PC-9 (cell line): ENCODE measurements at regions of chr2 and their contacts with region 1.

Region 1: GRCh38 chr2:168118733-168119514 is 128.5 kb downstream of the STK39 start:
- DNase-seq: peak in 1 of 2 experiments; percentile 35
- H3K4me3 ChIP-seq: no peak overlapping the region
- H3K27ac ChIP-seq: no peak overlapping the region
- H3K4me1 ChIP-seq: no peaks in the 10 kb centered on the region
- H3K27me3 ChIP-seq: no peaks in the 10 kb centered on the region
- CTCF ChIP-seq: peak; percentile 66

Region 2: DNA sequence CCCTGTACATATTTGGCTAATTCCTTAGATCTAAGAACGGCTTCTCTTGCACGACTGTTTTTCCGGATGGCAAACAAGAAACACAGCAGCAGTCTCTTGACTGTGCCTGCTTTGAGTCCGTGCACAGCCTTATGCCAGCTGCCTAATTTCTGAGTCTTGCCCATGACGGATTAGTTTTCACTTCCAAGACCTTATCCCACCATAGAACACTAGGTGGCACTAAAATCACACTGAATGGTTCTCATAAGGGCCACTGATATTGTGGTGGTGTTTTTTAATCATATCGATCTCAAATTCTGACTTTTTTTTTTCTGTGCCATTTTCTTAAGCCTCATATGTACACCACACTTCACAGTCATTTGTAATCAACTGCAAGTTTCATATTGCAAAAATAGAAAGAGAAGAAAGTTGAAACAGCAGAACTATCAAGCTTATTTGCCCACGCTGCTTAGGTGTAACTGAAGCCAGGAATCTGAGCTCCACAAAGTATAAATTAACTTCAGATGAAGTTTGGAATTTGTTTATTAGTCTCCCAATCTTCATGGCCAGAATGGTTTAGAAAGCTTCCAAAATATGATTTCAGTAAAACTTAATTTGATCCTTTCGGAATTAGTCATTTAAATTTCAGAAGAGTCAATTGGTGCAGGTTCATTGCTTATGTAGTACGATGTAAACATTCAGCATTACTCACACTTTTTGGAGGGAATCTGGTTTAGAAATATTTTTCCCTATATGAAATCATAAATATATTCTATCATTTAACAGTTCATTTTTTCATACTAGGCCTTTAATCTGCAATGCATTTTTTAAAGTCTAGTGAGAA is 1579.4 kb before region 1 on chr2:
- CTCF ChIA-PET with region 1: no interaction called
- POLR2A ChIA-PET with region 1: no interaction called
- intact Hi-C with region 1: loop called (anchors 1 kb)
- DNase-seq: peak in 1 of 2 experiments; percentile 5
- H3K4me3 ChIP-seq: no peak overlapping the region
- H3K27ac ChIP-seq: no peak overlapping the region
- H3K4me1 ChIP-seq: no peaks in the 10 kb centered on the region
- H3K27me3 ChIP-seq: no peaks in the 10 kb centered on the region
- CTCF ChIP-seq: peak; percentile 75

Region 3: DNA sequence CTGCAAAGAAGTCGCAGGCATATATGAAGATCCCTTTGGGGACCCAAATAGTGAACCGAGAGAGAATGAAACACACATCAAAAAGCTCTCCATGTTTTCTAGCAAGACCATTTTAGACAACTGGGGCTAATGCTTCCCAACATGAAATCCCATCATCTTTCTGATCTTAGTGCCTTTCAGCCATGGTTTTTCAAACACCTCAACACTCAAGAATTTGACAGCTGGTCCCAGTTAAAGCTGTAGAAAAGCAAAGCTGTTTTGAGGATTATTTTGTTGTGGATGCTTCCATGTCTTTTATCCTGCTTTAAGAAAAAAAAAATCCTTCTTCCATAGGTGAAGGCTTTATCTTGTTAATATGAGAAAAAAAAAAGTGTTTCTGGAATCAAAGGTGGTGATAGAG is 130.6 kb before region 1 on chr2:
- CTCF ChIA-PET with region 1: interaction called, 19 read pairs
- POLR2A ChIA-PET with region 1: no interaction called
- intact Hi-C with region 1: no loop called
- DNase-seq: no peak
- H3K4me3 ChIP-seq: no peak overlapping the region
- H3K27ac ChIP-seq: no peak overlapping the region
- H3K4me1 ChIP-seq: no peaks in the 10 kb centered on the region
- H3K27me3 ChIP-seq: no peaks in the 10 kb centered on the region
- CTCF ChIP-seq: no peak

Region 4: GRCh38 chr2:168330624-168331423 is 211.9 kb after region 1 on chr2:
- CTCF ChIA-PET with region 1: interaction called, 21 read pairs
- POLR2A ChIA-PET with region 1: no interaction called
- intact Hi-C with region 1: no loop called
- DNase-seq: no peak
- H3K4me3 ChIP-seq: no peak overlapping the region
- H3K27ac ChIP-seq: no peak overlapping the region
- H3K4me1 ChIP-seq: no peaks in the 10 kb centered on the region
- H3K27me3 ChIP-seq: no peaks in the 10 kb centered on the region
- CTCF ChIP-seq: no peak

Region 5: GRCh38 chr2:168920504-168921157 is 801.7 kb after region 1 on chr2:
- CTCF ChIA-PET with region 1: no interaction called
- POLR2A ChIA-PET with region 1: no interaction called
- intact Hi-C with region 1: loop called (anchors 5 kb)
- DNase-seq: no peak
- H3K4me3 ChIP-seq: no peak overlapping the region
- H3K27ac ChIP-seq: no peak overlapping the region
- H3K4me1 ChIP-seq: no peaks in the 10 kb centered on the region
- H3K27me3 ChIP-seq: no peaks in the 10 kb centered on the region
- CTCF ChIP-seq: peak; percentile 73